ENCODE measurements at regions of chr1 and their contacts with region 1.

Region 1: GRCh38 chr1:174743654-174744561 is 255.8 kb upstream of the CACYBP start:
- DNase-seq: no peak
- H3K4me3 ChIP-seq: no peak overlapping the region
- H3K27ac ChIP-seq: no peak overlapping the region
- H3K4me1 ChIP-seq: peaks cover 23% of the 10 kb centered on the region
- H3K27me3 ChIP-seq: no peaks in the 10 kb centered on the region
- CTCF ChIP-seq: peak; percentile 74

Region 2: GRCh38 chr1:174258148-174258550 is 485.8 kb before region 1 on chr1:
- intact Hi-C with region 1: loop called (anchors 5 kb)
- DNase-seq: no peak
- H3K4me3 ChIP-seq: no peak overlapping the region
- H3K27ac ChIP-seq: no peak overlapping the region
- H3K4me1 ChIP-seq: peaks cover 5% of the 10 kb centered on the region
- H3K27me3 ChIP-seq: no peaks in the 10 kb centered on the region
- CTCF ChIP-seq: peak; percentile 64

Measured in left ventricle myocardium inferior (tissue), 1 donor.